ENCODE measurements at regions of chr19 and their contacts with region 1.

Region 1: GRCh38 chr19:48664450-48664849 is 8.4 kb downstream of the NTN5 start:
- DNase-seq: no peak
- H3K4me3 ChIP-seq: no peak overlapping the region
- H3K27ac ChIP-seq: no peak overlapping the region
- H3K27me3 ChIP-seq: no peaks in the 10 kb centered on the region
- CTCF ChIP-seq: no peak

Region 2: GRCh38 chr19:48596679-48597465 is 67.6 kb before region 1 on chr19:
- CTCF ChIA-PET with region 1: no interaction called
- POLR2A ChIA-PET with region 1: no interaction called
- DNase-seq: no peak
- H3K4me3 ChIP-seq: no peak overlapping the region
- H3K27ac ChIP-seq: no peak overlapping the region
- H3K27me3 ChIP-seq: peaks cover 15% of the 10 kb centered on the region
- CTCF ChIP-seq: no peak

Region 3: GRCh38 chr19:48674921-48675824 is 10.7 kb after region 1 on chr19:
- CTCF ChIA-PET with region 1: interaction called, 22 read pairs
- POLR2A ChIA-PET with region 1: interaction called, 4 read pairs
- DNase-seq: no peak
- H3K4me3 ChIP-seq: no peak overlapping the region
- H3K27ac ChIP-seq: no peak overlapping the region
- H3K27me3 ChIP-seq: peaks cover 7% of the 10 kb centered on the region
- CTCF ChIP-seq: peak; percentile 86